PC-3 (cell line): ENCODE measurements at regions of chr7 and their contacts with region 1.

Region 1: GRCh38 chr7:30564243-30564892 is 30.3 kb upstream of the GARS1 start:
- DNase-seq: peak; percentile 88
- ATAC-seq: peak; percentile 75
- H3K4me3 ChIP-seq: no peak overlapping the region
- H3K27ac ChIP-seq: peak overlapping the region; percentile 94
- H3K4me1 ChIP-seq: peaks cover 34% of the 10 kb centered on the region
- H3K27me3 ChIP-seq: no peaks in the 10 kb centered on the region
- CTCF ChIP-seq: peak; percentile 90

Region 2: GRCh38 chr7:30276203-30276900 is 288.0 kb before region 1 on chr7:
- CTCF ChIA-PET with region 1: interaction called, 10 read pairs
- POLR2A ChIA-PET with region 1: no interaction called
- intact Hi-C with region 1: loop called (anchors 2 kb)
- DNase-seq: peak; percentile 82
- ATAC-seq: peak; percentile 93
- H3K4me3 ChIP-seq: no peak overlapping the region
- H3K27ac ChIP-seq: no peak overlapping the region
- H3K4me1 ChIP-seq: no peaks in the 10 kb centered on the region
- H3K27me3 ChIP-seq: no peaks in the 10 kb centered on the region
- CTCF ChIP-seq: peak; percentile 87

Region 3: GRCh38 chr7:30412810-30413504 is 151.4 kb before region 1 on chr7:
- CTCF ChIA-PET with region 1: no interaction called
- POLR2A ChIA-PET with region 1: no interaction called
- intact Hi-C with region 1: loop called (anchors 5 kb)
- DNase-seq: peak; percentile 85
- ATAC-seq: peak; percentile 95
- H3K4me3 ChIP-seq: no peak overlapping the region
- H3K27ac ChIP-seq: no peak overlapping the region
- H3K4me1 ChIP-seq: no peaks in the 10 kb centered on the region
- H3K27me3 ChIP-seq: no peaks in the 10 kb centered on the region
- CTCF ChIP-seq: peak; percentile 83

Region 4: DNA sequence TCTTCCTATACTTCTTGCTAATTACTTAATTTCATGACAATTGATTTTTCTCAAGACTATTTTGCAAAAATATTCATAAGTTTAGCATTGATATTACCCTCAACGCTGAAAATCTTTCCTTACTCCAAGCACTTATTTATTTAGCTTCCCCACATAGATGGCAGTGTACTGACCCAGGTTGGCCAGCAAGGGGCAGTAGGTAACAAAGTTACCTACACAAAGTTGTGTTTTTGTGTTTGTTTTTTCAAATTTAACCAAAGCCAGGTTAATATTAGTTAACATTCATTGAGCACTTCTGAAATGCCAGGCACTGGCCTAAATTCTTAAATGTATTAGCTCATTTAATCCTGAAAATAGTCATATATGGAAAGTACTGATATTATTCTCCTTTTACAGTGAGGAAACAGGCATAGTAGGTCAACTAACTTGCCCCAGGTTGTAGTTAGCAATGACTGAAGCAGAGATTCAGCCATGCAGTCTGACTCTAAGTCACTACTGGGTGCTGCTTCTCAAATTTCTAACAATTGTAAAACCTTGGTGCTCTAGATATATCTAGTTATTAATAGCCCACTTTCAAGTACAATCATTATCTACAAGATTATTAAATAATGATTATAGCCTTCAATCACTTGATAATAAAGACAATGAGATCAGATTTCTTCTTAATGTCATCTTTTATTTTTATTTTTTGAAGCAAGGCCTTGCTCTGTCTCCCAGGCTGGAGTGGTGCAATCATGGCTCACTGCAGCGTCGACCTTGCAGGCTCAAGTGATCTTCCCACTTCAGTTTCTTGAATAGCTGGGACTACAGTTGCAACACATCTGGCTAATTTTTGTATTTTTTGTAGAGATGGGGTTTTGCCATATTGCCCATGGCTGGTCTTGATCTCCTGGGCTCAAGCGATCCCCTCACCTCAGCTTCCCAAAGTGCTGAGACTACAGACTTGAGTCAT is 54.0 kb before region 1 on chr7:
- CTCF ChIA-PET with region 1: interaction called, 20 read pairs
- POLR2A ChIA-PET with region 1: no interaction called
- intact Hi-C with region 1: loop called (anchors 1 kb)
- DNase-seq: peak; percentile 61
- ATAC-seq: peak; percentile 66
- H3K4me3 ChIP-seq: no peak overlapping the region
- H3K27ac ChIP-seq: no peak overlapping the region
- H3K4me1 ChIP-seq: peaks cover 15% of the 10 kb centered on the region; the same call in 1 of the 2 replicates
- H3K27me3 ChIP-seq: no peaks in the 10 kb centered on the region
- CTCF ChIP-seq: peak; percentile 91

Region 5: DNA sequence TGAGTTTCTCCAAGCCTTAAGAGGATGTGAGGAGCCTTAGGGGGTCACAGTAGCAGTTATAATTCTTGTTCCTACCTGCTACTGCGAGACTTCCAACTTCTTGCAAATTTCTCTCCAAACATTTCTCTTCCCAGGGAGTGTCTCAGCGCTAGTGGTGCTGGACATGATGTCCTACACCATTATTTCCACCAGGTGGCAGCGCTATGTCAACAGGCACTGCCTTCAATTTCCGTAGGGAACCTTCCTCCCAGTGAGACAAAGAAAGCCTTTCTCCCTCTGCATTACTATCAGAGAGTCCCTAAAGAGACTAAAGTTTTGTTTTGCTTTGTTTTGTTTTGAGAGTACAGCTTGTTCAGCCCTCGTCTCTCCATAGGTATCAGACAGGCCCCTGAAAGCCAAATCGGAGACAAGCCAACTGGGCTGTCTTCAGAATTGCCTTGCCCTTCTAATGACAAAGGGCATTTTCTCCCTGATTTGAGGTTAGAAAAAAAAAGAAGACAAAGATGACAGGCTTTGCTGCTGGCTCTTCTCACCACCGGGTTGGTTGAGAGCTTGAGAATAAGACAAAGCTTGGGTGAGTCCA is 15.5 kb before region 1 on chr7:
- CTCF ChIA-PET with region 1: interaction called, 20 read pairs
- POLR2A ChIA-PET with region 1: interaction called, 3 read pairs
- intact Hi-C with region 1: loop called (anchors 1 kb)
- DNase-seq: peak; percentile 84
- ATAC-seq: peak; percentile 71
- H3K4me3 ChIP-seq: no peak overlapping the region
- H3K27ac ChIP-seq: peak overlapping the region; percentile 96
- H3K4me1 ChIP-seq: peaks cover 32% of the 10 kb centered on the region
- H3K27me3 ChIP-seq: no peaks in the 10 kb centered on the region
- CTCF ChIP-seq: peak; percentile 82